SK-N-SH (cell line): ENCODE measurements at regions of chr14 and their contacts with region 1.

Region 1: DNA sequence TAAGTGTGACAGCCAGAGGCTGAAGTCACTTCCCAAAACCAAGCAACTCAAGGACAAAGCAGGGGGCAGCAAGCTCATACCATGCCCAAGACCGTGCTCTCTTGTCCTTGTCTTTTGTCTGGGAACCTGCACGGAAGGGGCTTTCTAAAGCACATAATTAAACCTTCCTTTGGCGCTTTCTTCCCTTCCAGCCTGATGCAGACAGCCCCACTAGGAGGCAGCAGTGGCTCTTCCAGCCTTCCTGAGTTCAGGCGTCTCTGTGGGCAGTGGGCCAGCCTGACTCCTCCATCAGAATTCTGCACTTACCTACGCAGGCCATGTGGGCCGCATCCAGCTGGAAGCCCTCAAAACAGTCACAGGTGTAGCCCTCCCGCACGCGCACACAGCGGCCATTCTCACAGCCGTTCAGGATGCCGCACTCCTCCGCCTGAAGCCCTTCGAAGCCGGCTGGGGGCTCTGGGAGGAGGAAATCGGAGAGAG is 7.6 kb downstream of the ISCA2 start:
- DNase-seq: peak; percentile 87
- H3K4me3 ChIP-seq: peak overlapping the region in 1 of 2 experiments; percentile 49; a peak in 1 of 4 replicates
- H3K27ac ChIP-seq: no peak overlapping the region
- H3K4me1 ChIP-seq: peaks cover 0 to 13% of the 10 kb centered on the region in 2 experiments; a peak in 1 of 4 replicates
- H3K27me3 ChIP-seq: no peaks in the 10 kb centered on the region
- CTCF ChIP-seq: peak; percentile 61
- EP300 ChIP-seq: no peak
- RAD21 ChIP-seq: peak; percentile 91

Region 2: GRCh38 chr14:74444866-74445265 is 56.3 kb before region 1 on chr14:
- CTCF ChIA-PET with region 1: no interaction called
- POLR2A ChIA-PET with region 1: no interaction called
- DNase-seq: no peak
- H3K4me3 ChIP-seq: no peak overlapping the region
- H3K27ac ChIP-seq: no peak overlapping the region
- H3K4me1 ChIP-seq: no peaks in the 10 kb centered on the region
- H3K27me3 ChIP-seq: peaks cover 22% of the 10 kb centered on the region
- CTCF ChIP-seq: no peak
- EP300 ChIP-seq: no peak
- RAD21 ChIP-seq: no peak

Region 3: GRCh38 chr14:74524076-74524811 is 23.1 kb after region 1 on chr14:
- CTCF ChIA-PET with region 1: interaction called, 21 read pairs
- POLR2A ChIA-PET with region 1: no interaction called
- DNase-seq: no peak
- H3K4me3 ChIP-seq: no peak overlapping the region
- H3K27ac ChIP-seq: no peak overlapping the region
- H3K4me1 ChIP-seq: no peaks in the 10 kb centered on the region; a peak in 1 of 4 replicates
- H3K27me3 ChIP-seq: no peaks in the 10 kb centered on the region
- CTCF ChIP-seq: no peak
- EP300 ChIP-seq: no peak
- RAD21 ChIP-seq: no peak

Region 4: DNA sequence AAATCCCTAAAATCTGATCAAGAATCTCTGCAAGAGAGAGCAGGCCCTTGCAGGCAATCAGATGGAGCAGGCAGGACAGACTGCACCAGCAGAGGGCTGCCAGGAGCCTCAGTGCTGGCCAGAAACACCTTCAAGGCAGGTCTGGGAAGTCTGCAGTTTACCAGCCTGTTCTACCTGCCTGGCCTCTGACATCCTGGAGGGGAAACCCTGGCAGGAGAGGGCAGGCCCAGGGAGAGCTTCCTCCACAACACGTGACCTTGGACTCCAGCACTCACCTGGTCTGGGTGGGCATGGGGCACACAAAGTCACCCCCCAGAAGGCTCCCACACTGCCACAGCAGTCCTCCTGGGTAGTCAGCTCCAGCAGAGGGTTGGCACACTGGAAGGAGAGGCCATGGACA is 48.4 kb after region 1 on chr14:
- CTCF ChIA-PET with region 1: interaction called, 12 read pairs
- POLR2A ChIA-PET with region 1: no interaction called
- DNase-seq: no peak
- H3K4me3 ChIP-seq: no peak overlapping the region
- H3K27ac ChIP-seq: no peak overlapping the region; a peak in 1 of 4 replicates
- H3K4me1 ChIP-seq: peaks cover 0 to 65% of the 10 kb centered on the region in 2 experiments; a peak in 2 of 4 replicates
- H3K27me3 ChIP-seq: no peaks in the 10 kb centered on the region
- CTCF ChIP-seq: 0 out of 2 replicates have a peak, but pooled peaks have one; percentile 16
- EP300 ChIP-seq: no peak
- RAD21 ChIP-seq: peak; percentile 62

Region 5: DNA sequence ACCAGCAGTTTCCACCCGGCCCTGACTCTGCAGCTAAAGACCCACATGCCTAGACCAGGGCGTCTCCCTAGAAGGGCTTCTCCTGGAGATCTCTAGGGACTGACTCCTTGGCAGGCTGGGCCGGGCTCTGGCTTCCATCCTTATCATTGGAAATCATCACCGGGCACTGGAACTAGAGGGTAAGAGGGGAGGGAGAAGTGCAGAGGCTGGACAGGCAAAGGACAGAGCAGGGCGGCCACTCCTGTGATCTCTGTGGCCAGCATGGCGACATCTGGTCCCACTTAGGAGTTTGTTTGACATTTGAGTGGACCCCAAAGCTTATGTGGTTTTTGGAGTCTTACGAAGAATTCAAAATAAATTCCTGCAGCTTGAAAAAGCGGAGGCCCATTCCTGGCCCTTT is 103.7 kb after region 1 on chr14:
- CTCF ChIA-PET with region 1: interaction called, 126 read pairs
- POLR2A ChIA-PET with region 1: no interaction called
- DNase-seq: peak; percentile 56
- H3K4me3 ChIP-seq: no peak overlapping the region
- H3K27ac ChIP-seq: peak overlapping the region; percentile 64 to 81
- H3K4me1 ChIP-seq: peaks cover 30 to 33% of the 10 kb centered on the region in 2 experiments; a peak in 3 of 4 replicates
- H3K27me3 ChIP-seq: no peaks in the 10 kb centered on the region
- CTCF ChIP-seq: no peak
- EP300 ChIP-seq: no peak
- RAD21 ChIP-seq: no peak

Region 6: GRCh38 chr14:74630881-74631690 is 129.9 kb after region 1 on chr14:
- CTCF ChIA-PET with region 1: interaction called, 14 read pairs
- POLR2A ChIA-PET with region 1: no interaction called
- DNase-seq: no peak
- H3K4me3 ChIP-seq: no peak overlapping the region
- H3K27ac ChIP-seq: no peak overlapping the region
- H3K4me1 ChIP-seq: peaks cover 0 to 15% of the 10 kb centered on the region in 2 experiments; a peak in 1 of 4 replicates
- H3K27me3 ChIP-seq: no peaks in the 10 kb centered on the region
- CTCF ChIP-seq: no peak
- EP300 ChIP-seq: no peak
- RAD21 ChIP-seq: no peak